Ascending aorta (tissue), 2 donors: ENCODE measurements at regions of chrX and their contacts with region 1.

Region 1: GRCh38 chrX:10014462-10015356 is 47.6 kb downstream of the CLDN34 start:
- DNase-seq: peak; percentile 52 to 92
- H3K4me3 ChIP-seq: peak overlapping the region; percentile 56 to 82
- H3K27ac ChIP-seq: peak overlapping the region; percentile 89 to 92
- H3K4me1 ChIP-seq: peaks cover 0 to 5% of the 10 kb centered on the region in 2 donors
- H3K27me3 ChIP-seq: no peaks in the 10 kb centered on the region
- CTCF ChIP-seq: no peak

Region 2: GRCh38 chrX:10050481-10050880 is 35.8 kb after region 1 on chrX:
- intact Hi-C with region 1: loop called (anchors 2 kb)
- DNase-seq: no peak
- H3K4me3 ChIP-seq: no peak overlapping the region
- H3K27ac ChIP-seq: no peak overlapping the region
- H3K4me1 ChIP-seq: no peaks in the 10 kb centered on the region
- H3K27me3 ChIP-seq: no peaks in the 10 kb centered on the region
- CTCF ChIP-seq: no peak

Region 3: DNA sequence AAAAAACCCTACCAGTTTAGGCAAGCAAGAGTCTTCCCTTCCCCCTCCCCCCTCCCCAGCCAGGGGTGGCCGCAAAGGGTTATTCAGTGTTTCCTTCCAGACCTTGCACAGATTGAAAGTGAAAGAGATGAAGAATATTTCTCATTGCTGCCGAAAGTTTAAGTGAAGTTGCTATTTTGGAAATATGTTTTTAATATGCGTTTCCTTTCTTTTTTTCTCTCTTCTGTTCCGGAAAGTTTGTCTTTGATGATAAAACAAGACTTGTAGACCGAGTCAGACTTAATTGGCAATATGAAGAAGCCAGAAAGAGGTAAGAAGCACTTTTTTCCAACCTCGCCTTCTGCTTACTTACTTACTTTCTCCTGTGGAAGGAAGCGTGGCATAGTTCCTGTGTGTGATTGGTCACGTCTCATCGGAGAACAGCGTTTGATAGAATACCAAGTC is 83.6 kb after region 1 on chrX:
- intact Hi-C with region 1: loop called (anchors 5 kb)
- DNase-seq: no peak
- H3K4me3 ChIP-seq: no peak overlapping the region
- H3K27ac ChIP-seq: peak overlapping the region; percentile 76 to 77
- H3K4me1 ChIP-seq: peaks cover 0 to 9% of the 10 kb centered on the region in 2 donors
- H3K27me3 ChIP-seq: no peaks in the 10 kb centered on the region
- CTCF ChIP-seq: no peak